Activated CD4-positive, alpha-beta T cell treated with anti-CD3 and anti-CD28 coated beads for 36 hours (primary cell): ENCODE measurements at regions of chr12 and their contacts with region 1.

Region 1: GRCh38 chr12:117261247-117261646 is 71.0 kb upstream of the FBXO21 start:
- DNase-seq: no peak
- ATAC-seq: peak; percentile 42
- H3K4me3 Mint-ChIP-seq: no peak overlapping the region
- H3K27ac Mint-ChIP-seq: no peak overlapping the region
- H3K4me1 Mint-ChIP-seq: no peaks in the 10 kb centered on the region
- H3K27me3 Mint-ChIP-seq: peaks cover 11% of the 10 kb centered on the region

Region 2: DNA sequence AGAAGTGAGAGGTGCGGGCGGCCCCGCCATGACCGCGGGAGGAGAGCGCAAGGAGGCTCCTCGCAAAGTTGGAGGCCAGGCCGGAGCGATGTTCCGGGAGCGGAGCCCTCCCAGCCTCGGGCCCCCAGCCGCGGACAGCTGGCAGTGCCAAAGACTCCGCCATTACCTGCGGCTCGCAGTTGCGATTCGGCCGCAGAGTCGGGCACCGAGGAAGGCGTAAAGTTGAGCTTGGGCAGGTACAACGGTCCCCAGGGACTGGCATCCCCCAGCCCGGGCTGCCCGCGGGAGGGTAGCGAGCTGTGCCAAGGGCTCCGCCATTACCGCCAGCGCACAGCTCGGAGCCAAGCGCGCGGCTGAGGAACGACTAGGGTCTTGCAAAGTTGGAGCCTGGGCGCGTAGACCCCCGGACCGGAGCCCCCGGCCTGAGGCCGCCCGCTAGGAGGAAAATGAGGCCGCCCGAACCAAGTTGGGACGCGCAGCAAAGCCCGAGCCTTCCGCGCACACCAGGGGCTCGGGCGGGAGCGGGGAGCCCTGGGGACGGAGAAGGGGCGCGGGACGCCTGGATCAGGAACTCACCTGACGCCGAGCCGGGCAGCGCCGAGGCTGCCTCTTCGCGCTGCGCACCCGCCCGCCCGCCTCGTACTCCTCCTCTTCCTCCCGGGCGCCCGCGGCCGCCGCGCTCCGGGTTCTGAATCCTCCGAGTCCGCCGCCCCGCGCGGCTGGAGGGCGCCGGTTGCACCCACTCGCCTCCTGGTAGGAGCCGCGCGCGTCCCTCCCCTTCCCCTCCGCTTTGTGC is 99.5 kb after region 1 on chr12:
- CTCF ChIA-PET with region 1: no interaction called
- POLR2A ChIA-PET with region 1: no interaction called
- intact Hi-C with region 1: no loop called
- DNase-seq: no peak
- ATAC-seq: no peak
- H3K4me3 Mint-ChIP-seq: no peak overlapping the region
- H3K27ac Mint-ChIP-seq: no peak overlapping the region
- H3K4me1 Mint-ChIP-seq: no peaks in the 10 kb centered on the region
- H3K27me3 Mint-ChIP-seq: peaks cover 45% of the 10 kb centered on the region

Region 3: GRCh38 chr12:118704527-118705241 is 1443.4 kb after region 1 on chr12:
- CTCF ChIA-PET with region 1: no interaction called
- POLR2A ChIA-PET with region 1: no interaction called
- intact Hi-C with region 1: loop called in 1 of 2 experiments (anchors 5 kb)
- DNase-seq: no peak
- ATAC-seq: no peak
- H3K4me3 Mint-ChIP-seq: no peak overlapping the region
- H3K27ac Mint-ChIP-seq: no peak overlapping the region
- H3K4me1 Mint-ChIP-seq: no peaks in the 10 kb centered on the region
- H3K27me3 Mint-ChIP-seq: no peaks in the 10 kb centered on the region